ENCODE measurements at regions of chr15 and their contacts with region 1.

Region 1: GRCh38 chr15:36428102-36428845 is 151.2 kb upstream of the CDIN1 start:
- DNase-seq: no peak
- H3K4me3 ChIP-seq: no peak overlapping the region
- H3K27ac ChIP-seq: no peak overlapping the region
- H3K4me1 ChIP-seq: no peaks in the 10 kb centered on the region
- H3K27me3 ChIP-seq: no peaks in the 10 kb centered on the region
- CTCF ChIP-seq: no peak
- EP300 ChIP-seq: no peak
- POLR2A ChIP-seq: no peak

Region 2: GRCh38 chr15:36251450-36251849 is 176.8 kb before region 1 on chr15:
- intact Hi-C with region 1: no loop called
- DNase-seq: no peak
- H3K4me3 ChIP-seq: no peak overlapping the region
- H3K27ac ChIP-seq: no peak overlapping the region
- H3K4me1 ChIP-seq: no peaks in the 10 kb centered on the region
- H3K27me3 ChIP-seq: no peaks in the 10 kb centered on the region
- CTCF ChIP-seq: no peak
- EP300 ChIP-seq: no peak
- POLR2A ChIP-seq: no peak

Region 3: GRCh38 chr15:36363335-36363734 is 64.9 kb before region 1 on chr15:
- intact Hi-C with region 1: no loop called
- DNase-seq: no peak
- H3K4me3 ChIP-seq: no peak overlapping the region
- H3K27ac ChIP-seq: no peak overlapping the region
- H3K4me1 ChIP-seq: no peaks in the 10 kb centered on the region
- H3K27me3 ChIP-seq: no peaks in the 10 kb centered on the region
- CTCF ChIP-seq: no peak
- EP300 ChIP-seq: no peak
- POLR2A ChIP-seq: no peak

Region 4: GRCh38 chr15:36529296-36530011 is 101.2 kb after region 1 on chr15:
- intact Hi-C with region 1: loop called in 1 of 4 experiments (anchors 10 kb)
- DNase-seq: no peak
- H3K4me3 ChIP-seq: no peak overlapping the region
- H3K27ac ChIP-seq: no peak overlapping the region
- H3K4me1 ChIP-seq: no peaks in the 10 kb centered on the region
- H3K27me3 ChIP-seq: no peaks in the 10 kb centered on the region
- CTCF ChIP-seq: no peak
- EP300 ChIP-seq: no peak
- POLR2A ChIP-seq: no peak

Measured in ovary (tissue), 10 donors.